Caco-2 (cell line): ENCODE measurements at regions of chr6 and their contacts with region 1.

Region 1: DNA sequence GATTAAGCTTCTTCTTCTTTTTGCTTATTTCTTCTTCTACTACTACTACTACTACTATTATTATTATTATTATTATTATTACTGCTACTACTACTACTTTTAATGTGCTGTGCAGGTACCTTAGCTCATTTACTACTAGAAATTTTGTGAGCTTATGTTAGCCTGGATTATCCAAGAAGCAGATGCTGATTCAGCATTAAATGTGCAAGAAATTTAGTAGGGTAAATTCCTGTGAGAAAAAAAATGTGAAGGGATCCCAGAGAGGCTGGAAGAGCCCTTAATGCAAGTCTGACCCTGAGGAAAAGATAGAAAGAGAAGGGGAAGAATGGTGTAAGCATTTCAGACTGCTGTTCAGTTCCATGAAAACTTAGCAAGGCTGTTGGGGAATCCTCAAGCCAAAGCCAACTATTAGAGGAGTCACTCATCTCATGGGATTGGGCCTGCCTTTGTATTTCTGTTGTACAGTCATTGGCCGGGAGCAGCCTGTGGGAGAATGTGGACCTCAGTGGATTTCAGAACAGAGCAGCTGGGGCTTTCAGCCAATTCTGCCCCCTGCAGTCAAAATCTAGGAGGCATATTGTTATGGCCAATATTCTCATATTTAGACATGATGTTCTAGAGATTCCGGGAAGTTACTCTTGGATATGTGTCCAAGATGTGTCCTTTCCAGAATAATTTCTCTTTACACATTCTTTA is 37.2 kb upstream of the TSPYL1 start:
- DNase-seq: peak in 1 of 2 experiments; percentile 11
- H3K4me3 ChIP-seq: no peak overlapping the region
- H3K4me3 Mint-ChIP-seq: no peak overlapping the region
- H3K27ac Mint-ChIP-seq: no peak overlapping the region
- H3K4me1 ChIP-seq: no peaks in the 10 kb centered on the region
- H3K4me1 Mint-ChIP-seq: no peaks in the 10 kb centered on the region
- H3K27me3 ChIP-seq: no peaks in the 10 kb centered on the region
- H3K27me3 Mint-ChIP-seq: no peaks in the 10 kb centered on the region
- CTCF ChIP-seq: peak in 1 of 2 experiments; percentile 26

Region 2: GRCh38 chr6:116287689-116288282 is 29.1 kb before region 1 on chr6:
- CTCF ChIA-PET with region 1: interaction called, 3 read pairs
- POLR2A ChIA-PET with region 1: no interaction called
- intact Hi-C with region 1: loop called (anchors 1 kb)
- DNase-seq: peak in 1 of 2 experiments; percentile 17
- H3K4me3 ChIP-seq: no peak overlapping the region
- H3K4me3 Mint-ChIP-seq: no peak overlapping the region
- H3K27ac Mint-ChIP-seq: no peak overlapping the region
- H3K4me1 ChIP-seq: no peaks in the 10 kb centered on the region
- H3K4me1 Mint-ChIP-seq: no peaks in the 10 kb centered on the region
- H3K27me3 ChIP-seq: no peaks in the 10 kb centered on the region
- H3K27me3 Mint-ChIP-seq: no peaks in the 10 kb centered on the region
- CTCF ChIP-seq: peak; percentile 76 to 81

Region 3: DNA sequence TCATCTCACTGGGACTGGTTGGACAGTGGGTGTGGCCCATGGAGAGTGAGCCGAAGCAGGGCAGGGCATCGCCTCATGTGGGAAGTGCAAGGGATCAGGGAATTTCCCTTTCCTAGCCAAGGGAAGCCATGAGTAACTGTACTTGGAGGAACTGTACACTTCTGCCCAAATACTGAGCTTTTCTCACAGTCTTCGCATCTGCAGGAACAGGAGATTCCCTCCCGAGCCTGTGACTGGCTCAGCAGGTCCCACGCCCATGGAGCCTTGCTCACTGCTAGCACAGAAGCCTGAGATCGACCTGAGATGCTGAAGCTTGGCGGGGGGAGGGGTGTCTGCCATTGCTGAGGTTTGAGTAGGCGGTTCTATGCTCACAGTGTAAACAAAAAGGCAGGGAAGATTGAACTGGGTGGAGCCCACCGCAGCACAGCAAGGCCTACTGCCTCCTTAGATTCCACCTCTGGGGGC is 184.1 kb after region 1 on chr6:
- CTCF ChIA-PET with region 1: no interaction called
- POLR2A ChIA-PET with region 1: no interaction called
- intact Hi-C with region 1: no loop called
- DNase-seq: peak; percentile 4 to 42
- H3K4me3 ChIP-seq: no peak overlapping the region
- H3K4me3 Mint-ChIP-seq: no peak overlapping the region
- H3K27ac Mint-ChIP-seq: no peak overlapping the region
- H3K4me1 ChIP-seq: 0 out of 2 replicates have a peak, but pooled peaks cover 4% of the 10 kb centered on the region
- H3K4me1 Mint-ChIP-seq: no peaks in the 10 kb centered on the region
- H3K27me3 ChIP-seq: no peaks in the 10 kb centered on the region
- H3K27me3 Mint-ChIP-seq: peaks cover 5% of the 10 kb centered on the region
- CTCF ChIP-seq: no peak